A549 (cell line): ENCODE measurements at regions of chr17 and their contacts with region 1.

Region 1: GRCh38 chr17:21119247-21119918 is 7.4 kb upstream of the DHRS7B start:
- DNase-seq: peak; percentile 82 to 86
- ATAC-seq: peak; percentile 86 to 92
- H3K4me3 ChIP-seq: peak overlapping the region; percentile 23; the same call in 1 of the 3 replicates
- H3K27ac ChIP-seq: no peak overlapping the region
- H3K4me1 ChIP-seq: no peaks in the 10 kb centered on the region
- CTCF ChIP-seq: peak; percentile 95
- EP300 ChIP-seq: no peak
- POLR2A ChIP-seq: no peak
- RAD21 ChIP-seq: peak; percentile 78 to 88

Region 2: DNA sequence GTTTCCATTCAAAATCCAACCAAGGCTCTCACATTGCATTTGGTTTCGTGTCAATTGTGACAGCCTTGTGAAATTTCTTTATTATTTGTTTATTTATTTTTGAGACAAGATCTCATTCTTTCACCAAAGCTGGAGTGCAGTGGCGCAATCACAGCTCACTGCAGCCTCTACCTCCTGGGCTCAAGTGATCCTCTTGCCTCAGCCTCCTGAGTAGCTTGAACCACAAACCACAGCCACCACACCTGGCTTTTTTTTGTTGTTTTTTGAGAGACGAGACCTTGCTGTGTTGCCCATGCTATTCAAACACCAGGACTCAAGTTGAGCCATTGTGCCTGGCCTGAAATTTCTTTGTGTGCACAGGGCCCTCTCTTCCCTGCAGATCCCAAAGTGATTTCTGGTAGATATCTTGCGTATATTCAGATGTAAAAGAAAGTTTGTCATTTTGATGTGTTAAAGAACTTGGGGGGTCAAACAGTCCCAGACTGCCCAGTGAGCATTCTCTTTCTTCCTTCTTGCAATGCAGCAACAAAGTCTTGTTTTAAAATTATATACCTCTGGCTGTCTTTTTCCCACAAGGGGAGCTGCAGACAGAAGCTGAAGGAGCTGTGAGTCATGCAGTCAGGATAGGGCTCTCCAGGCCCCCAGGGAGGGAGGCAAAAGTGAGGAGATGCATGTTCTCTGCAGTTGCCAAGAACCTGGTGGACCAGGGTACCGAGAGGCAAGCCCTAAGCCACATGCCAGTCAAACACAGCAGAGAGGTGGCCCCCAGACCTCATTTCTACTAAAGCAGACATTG is 61.1 kb before region 1 on chr17:
- CTCF ChIA-PET with region 1: interaction called, 10 read pairs
- POLR2A ChIA-PET with region 1: no interaction called
- DNase-seq: peak in 1 of 2 experiments; percentile 47
- ATAC-seq: peak; percentile 78 to 79
- H3K4me3 ChIP-seq: no peak overlapping the region
- H3K27ac ChIP-seq: no peak overlapping the region
- H3K4me1 ChIP-seq: no peaks in the 10 kb centered on the region
- CTCF ChIP-seq: no peak
- EP300 ChIP-seq: no peak
- POLR2A ChIP-seq: no peak
- RAD21 ChIP-seq: no peak

Region 3: DNA sequence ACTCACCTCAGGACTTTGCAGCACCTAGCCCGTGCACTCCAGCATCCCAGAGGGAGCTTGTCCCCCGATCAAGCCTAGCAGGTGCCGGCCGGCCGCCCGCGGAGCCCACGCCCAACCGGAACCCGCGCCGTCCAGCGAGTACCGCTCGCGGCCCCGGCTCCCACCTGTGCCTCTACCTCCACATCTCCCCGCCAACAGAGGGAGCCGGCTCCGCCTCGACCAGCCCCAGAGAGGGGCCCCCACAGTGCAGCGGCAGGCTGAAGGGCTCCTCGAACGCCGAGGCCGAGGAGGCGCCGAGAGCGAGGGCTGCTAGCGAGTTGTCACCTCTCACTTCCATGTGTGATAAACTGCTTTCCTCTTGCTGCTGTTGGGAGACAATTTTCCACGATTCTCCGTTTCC is 33.7 kb before region 1 on chr17:
- CTCF ChIA-PET with region 1: no interaction called
- POLR2A ChIA-PET with region 1: no interaction called
- DNase-seq: no peak
- ATAC-seq: no peak
- H3K4me3 ChIP-seq: no peak overlapping the region
- H3K27ac ChIP-seq: no peak overlapping the region
- H3K4me1 ChIP-seq: no peaks in the 10 kb centered on the region
- CTCF ChIP-seq: no peak
- EP300 ChIP-seq: no peak
- POLR2A ChIP-seq: no peak
- RAD21 ChIP-seq: no peak

Region 4: DNA sequence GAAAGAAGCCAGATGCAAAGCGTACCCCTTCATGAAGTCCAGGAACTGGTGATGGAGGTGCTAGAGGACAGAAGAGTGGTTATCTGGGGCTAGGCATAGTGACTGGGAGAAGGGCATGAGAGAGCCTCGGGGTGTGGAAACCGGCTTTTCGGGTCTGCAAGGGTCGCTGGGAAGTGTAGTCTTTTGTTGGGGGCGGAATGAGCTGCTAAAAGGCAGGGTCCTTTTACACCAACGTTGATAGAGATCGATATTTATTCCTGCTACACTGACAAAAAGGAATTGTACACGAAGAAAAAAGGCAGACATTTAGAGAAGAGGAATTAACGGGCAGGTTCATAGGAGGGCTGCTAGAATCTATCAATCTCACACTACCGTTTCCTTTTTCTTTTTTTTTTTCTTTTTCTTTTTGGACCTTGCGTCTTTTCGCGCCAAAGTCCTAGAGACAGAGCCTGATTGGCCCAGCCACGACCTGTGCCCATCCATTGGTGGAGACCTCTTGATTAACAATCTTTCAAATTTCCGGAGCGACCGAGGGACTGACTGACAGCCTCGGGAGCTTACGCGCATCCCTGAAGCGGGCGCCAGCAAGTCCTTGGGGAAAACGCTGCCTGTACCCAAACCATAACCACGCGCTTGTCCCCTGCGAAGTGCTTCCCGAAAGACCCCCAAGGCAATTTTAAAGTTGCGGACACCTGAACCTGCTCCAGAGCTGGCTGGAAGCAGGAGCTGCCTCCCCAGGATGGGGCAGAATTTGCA is 20.3 kb before region 1 on chr17:
- CTCF ChIA-PET with region 1: interaction called, 17 read pairs
- POLR2A ChIA-PET with region 1: no interaction called
- DNase-seq: peak; percentile 94 to 98
- ATAC-seq: peak; percentile 99
- H3K4me3 ChIP-seq: peak overlapping the region; percentile 56
- H3K27ac ChIP-seq: peak overlapping the region; percentile 57 to 78; a peak in 5 of 6 replicates
- H3K4me1 ChIP-seq: 0 out of 3 replicates have a peak, but pooled peaks cover 4% of the 10 kb centered on the region
- CTCF ChIP-seq: no peak
- EP300 ChIP-seq: no peak
- POLR2A ChIP-seq: peak; percentile 32
- RAD21 ChIP-seq: no peak

Region 5: GRCh38 chr17:21132428-21132827 is 13.0 kb after region 1 on chr17:
- CTCF ChIA-PET with region 1: interaction called, 39 read pairs
- POLR2A ChIA-PET with region 1: interaction called, 8 read pairs
- DNase-seq: no peak
- ATAC-seq: peak in 1 of 2 experiments; percentile 38; a peak in 1 of 6 replicates
- H3K4me3 ChIP-seq: no peak overlapping the region
- H3K27ac ChIP-seq: no peak overlapping the region
- H3K4me1 ChIP-seq: peaks cover 7% of the 10 kb centered on the region; the same call in 1 of the 3 replicates
- CTCF ChIP-seq: no peak
- EP300 ChIP-seq: no peak
- POLR2A ChIP-seq: no peak
- RAD21 ChIP-seq: no peak

Region 6: DNA sequence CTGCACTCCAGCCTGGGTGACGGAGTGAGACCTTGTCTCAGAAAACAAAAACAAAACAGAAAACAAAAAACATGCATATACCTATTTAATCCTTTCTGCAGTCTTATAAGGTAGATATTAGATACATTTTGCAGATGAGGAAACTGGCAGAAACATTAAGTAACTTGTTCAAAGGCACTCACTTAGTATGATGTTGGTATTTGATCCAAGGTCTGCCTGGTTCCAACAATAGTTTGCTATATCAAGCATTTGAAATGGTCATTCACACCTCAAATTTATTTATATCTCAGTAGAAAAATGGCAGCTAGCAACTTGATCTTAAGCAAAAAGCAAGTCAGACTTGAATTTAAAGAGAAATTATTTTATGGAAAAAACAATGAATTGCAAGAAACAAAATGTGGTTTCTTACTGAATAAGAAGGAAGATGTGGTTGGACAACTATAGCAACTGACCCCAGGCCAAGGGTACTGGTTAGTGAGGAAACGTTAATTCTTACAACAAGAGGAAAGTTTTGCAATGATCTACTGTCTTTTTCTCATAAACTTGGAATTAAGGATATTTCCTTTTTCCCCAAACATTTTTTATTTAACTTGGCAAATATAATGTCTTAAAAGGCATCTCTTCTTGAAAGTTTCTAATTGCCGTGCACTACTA is 27.1 kb after region 1 on chr17:
- CTCF ChIA-PET with region 1: no interaction called
- POLR2A ChIA-PET with region 1: no interaction called
- DNase-seq: no peak
- ATAC-seq: no peak
- H3K4me3 ChIP-seq: no peak overlapping the region
- H3K27ac ChIP-seq: no peak overlapping the region
- H3K4me1 ChIP-seq: 0 out of 3 replicates have a peak, but pooled peaks cover 7% of the 10 kb centered on the region
- CTCF ChIP-seq: no peak
- EP300 ChIP-seq: no peak
- POLR2A ChIP-seq: no peak
- RAD21 ChIP-seq: no peak

Region 7: DNA sequence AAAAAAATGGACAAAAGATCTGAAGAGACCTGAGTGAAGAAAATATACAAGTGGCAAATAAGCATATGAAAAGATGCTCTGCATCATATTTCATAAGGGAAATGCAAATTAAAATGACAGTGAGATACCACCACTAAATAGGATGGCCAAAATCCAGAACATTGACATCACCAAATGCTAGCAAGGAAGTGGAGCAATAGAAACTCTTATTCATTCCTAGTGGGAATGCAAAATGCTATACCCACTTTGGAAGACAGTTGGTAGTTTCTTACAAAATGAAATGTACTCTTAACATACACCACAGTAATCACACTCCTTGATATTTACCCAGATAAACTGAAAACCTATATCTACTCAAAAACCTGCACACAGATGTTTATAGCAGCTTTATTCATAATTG is 41.0 kb after region 1 on chr17:
- CTCF ChIA-PET with region 1: no interaction called
- POLR2A ChIA-PET with region 1: no interaction called
- DNase-seq: no peak
- ATAC-seq: no peak
- H3K4me3 ChIP-seq: no peak overlapping the region
- H3K27ac ChIP-seq: no peak overlapping the region
- H3K4me1 ChIP-seq: peaks cover 14% of the 10 kb centered on the region; the same call in 2 of the 3 replicates
- CTCF ChIP-seq: no peak
- EP300 ChIP-seq: no peak
- POLR2A ChIP-seq: no peak
- RAD21 ChIP-seq: no peak

Region 8: GRCh38 chr17:21189361-21189760 is 70.0 kb after region 1 on chr17:
- CTCF ChIA-PET with region 1: interaction called, 12 read pairs
- POLR2A ChIA-PET with region 1: interaction called, 3 read pairs
- DNase-seq: no peak
- ATAC-seq: no peak
- H3K4me3 ChIP-seq: no peak overlapping the region
- H3K27ac ChIP-seq: no peak overlapping the region
- H3K4me1 ChIP-seq: no peaks in the 10 kb centered on the region
- CTCF ChIP-seq: no peak
- EP300 ChIP-seq: no peak
- POLR2A ChIP-seq: no peak
- RAD21 ChIP-seq: no peak

Region 9: GRCh38 chr17:21239680-21240368 is 120.4 kb after region 1 on chr17:
- CTCF ChIA-PET with region 1: interaction called, 12 read pairs
- POLR2A ChIA-PET with region 1: no interaction called
- DNase-seq: peak; percentile 47 to 84
- ATAC-seq: peak; percentile 57 to 82; a peak in 4 of 6 replicates
- H3K4me3 ChIP-seq: no peak overlapping the region
- H3K27ac ChIP-seq: no peak overlapping the region
- H3K4me1 ChIP-seq: no peaks in the 10 kb centered on the region
- CTCF ChIP-seq: peak; percentile 40
- EP300 ChIP-seq: no peak
- POLR2A ChIP-seq: no peak
- RAD21 ChIP-seq: peak in 1 of 2 experiments; percentile 33; a peak in 1 of 5 replicates